SK-N-SH (cell line): ENCODE measurements at regions of chr17 and their contacts with region 1.

Region 1: DNA sequence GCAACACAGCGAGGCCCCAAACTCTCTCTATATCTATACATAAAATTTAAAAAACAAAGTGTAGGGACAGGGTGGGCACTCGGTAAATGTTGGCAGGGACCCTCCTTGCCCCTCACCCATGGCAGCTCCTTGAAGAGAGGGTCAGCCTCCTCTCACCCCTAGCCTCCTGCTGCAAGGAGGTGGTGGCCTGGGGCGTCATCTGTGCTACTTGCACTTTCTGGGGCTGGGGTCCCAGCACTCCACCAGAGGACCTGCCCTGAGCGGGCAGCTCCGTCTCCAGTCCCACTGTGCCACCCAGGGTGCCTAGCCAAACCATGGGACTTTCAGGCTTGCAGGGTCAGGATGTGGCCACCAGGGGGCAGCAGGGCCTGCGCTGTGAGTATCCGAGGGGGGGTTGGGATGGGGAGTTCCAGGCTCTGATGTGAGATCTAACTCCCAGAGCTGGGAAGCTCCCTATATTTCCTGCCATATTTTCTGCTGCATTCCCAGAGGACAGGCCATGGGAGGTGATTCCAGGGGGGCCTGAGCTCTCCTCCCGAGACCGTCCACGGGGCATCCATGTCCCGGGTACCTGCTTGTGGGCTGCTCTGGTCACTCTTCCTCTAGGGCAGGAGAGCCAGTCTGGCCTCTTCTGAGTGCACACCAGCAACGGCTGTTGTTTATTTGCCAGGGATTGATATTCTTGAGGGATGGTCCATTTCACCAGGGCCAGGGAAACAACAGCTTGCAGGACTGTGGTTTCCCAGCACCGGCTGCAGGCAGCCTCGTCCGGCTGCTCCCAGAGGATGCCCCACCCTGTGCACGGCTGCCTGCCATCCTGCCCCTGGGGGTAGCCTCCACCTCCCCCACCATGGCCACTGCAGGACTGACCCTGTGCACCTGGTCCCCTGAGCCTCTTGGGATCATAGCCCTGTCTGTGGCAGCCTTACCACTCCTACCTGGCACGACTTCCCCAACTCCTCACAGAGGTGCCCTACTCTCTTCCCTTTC is 1.1 kb downstream of the GPR142 start:
- DNase-seq: peak; percentile 95
- H3K4me3 ChIP-seq: no peak overlapping the region; a peak in 1 of 4 replicates
- H3K27ac ChIP-seq: no peak overlapping the region
- H3K4me1 ChIP-seq: peaks cover 0 to 5% of the 10 kb centered on the region in 2 experiments; a peak in 1 of 4 replicates
- H3K27me3 ChIP-seq: no peaks in the 10 kb centered on the region
- CTCF ChIP-seq: peak; percentile 63
- EP300 ChIP-seq: no peak
- RAD21 ChIP-seq: peak; percentile 72

Region 2: GRCh38 chr17:74305865-74306654 is 62.3 kb before region 1 on chr17:
- CTCF ChIA-PET with region 1: interaction called, 20 read pairs
- POLR2A ChIA-PET with region 1: no interaction called
- DNase-seq: no peak
- H3K4me3 ChIP-seq: no peak overlapping the region
- H3K27ac ChIP-seq: no peak overlapping the region
- H3K4me1 ChIP-seq: no peaks in the 10 kb centered on the region
- H3K27me3 ChIP-seq: no peaks in the 10 kb centered on the region
- CTCF ChIP-seq: no peak
- EP300 ChIP-seq: no peak
- RAD21 ChIP-seq: peak; percentile 28; the same call in 1 of the 2 replicates

Region 3: DNA sequence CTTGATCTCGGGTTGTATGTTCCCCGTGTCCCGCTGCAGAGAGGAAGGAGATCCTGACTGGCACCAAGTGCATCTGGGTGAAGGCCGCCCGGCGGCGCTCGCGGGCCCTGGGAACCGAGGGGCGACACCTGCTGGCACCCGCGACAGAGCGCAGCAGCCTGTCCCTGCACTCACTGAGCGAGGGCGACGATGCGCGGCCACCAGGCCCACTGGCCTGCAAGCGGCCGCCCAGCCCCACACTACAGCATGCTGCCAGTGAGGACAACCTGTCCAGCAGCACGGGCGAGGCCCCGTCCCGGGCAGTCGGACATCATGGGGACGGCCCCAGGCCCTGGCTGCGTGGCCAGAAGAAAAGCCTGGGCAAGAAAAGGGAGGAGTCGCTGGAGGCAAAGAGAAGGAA is 14.3 kb before region 1 on chr17:
- CTCF ChIA-PET with region 1: interaction called, 194 read pairs
- POLR2A ChIA-PET with region 1: no interaction called
- DNase-seq: peak; percentile 94
- H3K4me3 ChIP-seq: no peak overlapping the region
- H3K27ac ChIP-seq: no peak overlapping the region
- H3K4me1 ChIP-seq: peaks cover 0 to 2% of the 10 kb centered on the region in 2 experiments; a peak in 1 of 4 replicates
- H3K27me3 ChIP-seq: no peaks in the 10 kb centered on the region
- CTCF ChIP-seq: no peak
- EP300 ChIP-seq: no peak
- RAD21 ChIP-seq: peak; percentile 54

Region 4: DNA sequence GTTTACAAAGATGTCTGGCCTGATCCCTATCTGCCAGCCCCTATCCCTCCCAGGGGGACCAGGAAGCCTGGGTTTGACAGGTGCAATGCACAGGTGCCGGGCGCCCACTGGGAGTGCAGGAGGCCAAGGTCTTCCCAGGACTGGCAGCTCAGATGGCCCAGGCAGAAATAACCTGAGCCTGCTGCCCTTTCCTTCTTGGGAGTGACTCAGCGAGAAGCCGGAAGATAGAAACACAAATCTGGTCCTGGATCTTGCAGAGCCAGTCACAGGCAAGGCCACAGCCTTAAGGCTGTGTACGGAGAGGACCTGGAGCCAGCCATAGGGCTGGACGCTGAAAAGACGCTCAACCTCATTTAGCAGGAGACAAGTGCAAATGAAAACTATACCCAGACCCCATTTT is 26.6 kb after region 1 on chr17:
- CTCF ChIA-PET with region 1: interaction called, 31 read pairs
- POLR2A ChIA-PET with region 1: no interaction called
- DNase-seq: no peak
- H3K4me3 ChIP-seq: no peak overlapping the region
- H3K27ac ChIP-seq: no peak overlapping the region
- H3K4me1 ChIP-seq: no peaks in the 10 kb centered on the region; a peak in 1 of 4 replicates
- H3K27me3 ChIP-seq: no peaks in the 10 kb centered on the region
- CTCF ChIP-seq: no peak
- EP300 ChIP-seq: no peak
- RAD21 ChIP-seq: no peak

Region 5: DNA sequence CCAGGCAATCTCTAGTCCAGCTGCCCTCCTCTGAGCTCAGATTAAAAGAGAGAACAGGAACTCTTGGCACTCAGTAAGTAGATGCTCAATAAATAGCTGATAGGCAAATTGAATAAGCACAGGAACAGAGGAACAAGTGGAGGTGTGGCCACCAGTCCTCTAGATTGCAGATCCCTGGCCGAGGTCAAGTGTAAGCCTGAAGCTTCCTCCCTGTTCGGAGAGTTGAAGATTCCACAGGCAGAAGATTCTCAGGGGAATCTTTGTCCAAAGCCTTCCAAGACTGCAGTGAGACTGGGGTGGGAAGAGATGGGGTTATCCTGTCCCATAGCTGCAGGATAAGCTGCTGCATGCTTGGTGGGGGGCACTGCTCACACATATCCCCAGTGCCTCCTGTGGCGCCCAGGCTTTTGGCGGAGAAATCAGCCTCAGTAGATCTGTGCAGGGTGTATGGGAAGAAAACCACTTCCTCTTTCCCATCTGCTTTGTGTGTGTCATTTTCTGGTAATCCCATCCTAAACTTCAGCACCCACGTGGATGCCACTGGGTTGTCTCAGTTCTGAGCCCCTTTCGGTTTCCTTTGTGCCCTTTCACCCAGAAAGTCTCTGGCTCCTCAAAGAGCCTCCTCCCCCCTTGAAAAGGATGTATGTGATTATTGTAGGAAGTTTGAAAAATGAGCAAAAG is 110.2 kb after region 1 on chr17:
- CTCF ChIA-PET with region 1: interaction called, 61 read pairs
- POLR2A ChIA-PET with region 1: no interaction called
- DNase-seq: peak; percentile 12
- H3K4me3 ChIP-seq: no peak overlapping the region
- H3K27ac ChIP-seq: no peak overlapping the region
- H3K4me1 ChIP-seq: no peaks in the 10 kb centered on the region
- H3K27me3 ChIP-seq: no peaks in the 10 kb centered on the region
- CTCF ChIP-seq: no peak
- EP300 ChIP-seq: no peak
- RAD21 ChIP-seq: no peak

Region 6: DNA sequence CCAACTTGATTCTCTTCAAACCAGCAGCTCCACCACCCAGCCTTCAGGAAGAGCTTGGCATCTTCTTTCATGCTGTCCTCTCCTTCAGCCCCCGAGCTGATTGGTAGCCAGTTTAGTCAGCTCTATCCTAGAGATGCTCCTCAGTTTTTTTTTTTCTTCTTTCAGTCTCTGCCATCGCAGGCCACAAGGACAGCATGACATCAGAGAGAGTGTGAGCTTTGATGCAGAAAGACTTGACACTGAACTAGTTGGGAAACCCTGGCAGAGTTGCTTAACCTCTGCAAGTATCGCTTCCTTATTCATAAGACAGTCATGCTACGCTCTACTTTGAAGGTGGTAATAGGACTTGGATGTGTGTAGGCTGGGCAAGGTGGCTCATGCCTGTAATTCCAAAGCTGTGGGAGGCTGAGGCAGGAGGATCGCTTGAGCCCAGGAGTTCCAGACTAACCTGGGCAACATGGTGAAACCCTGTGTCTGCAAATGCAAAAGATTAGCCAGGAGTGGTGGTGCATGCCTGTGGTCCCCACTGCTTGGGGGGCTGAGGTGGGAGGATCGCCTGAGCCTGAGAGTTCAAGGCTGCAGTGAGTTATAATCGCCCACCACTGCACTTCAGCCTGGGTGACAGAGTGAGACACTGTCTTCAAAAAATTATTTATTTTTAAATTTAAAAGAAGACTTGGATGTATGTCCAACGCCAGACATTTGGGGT is 160.3 kb after region 1 on chr17:
- CTCF ChIA-PET with region 1: interaction called, 23 read pairs
- POLR2A ChIA-PET with region 1: no interaction called
- DNase-seq: no peak
- H3K4me3 ChIP-seq: no peak overlapping the region
- H3K27ac ChIP-seq: no peak overlapping the region
- H3K4me1 ChIP-seq: no peaks in the 10 kb centered on the region
- H3K27me3 ChIP-seq: no peaks in the 10 kb centered on the region
- CTCF ChIP-seq: no peak
- EP300 ChIP-seq: no peak
- RAD21 ChIP-seq: no peak

Region 7: DNA sequence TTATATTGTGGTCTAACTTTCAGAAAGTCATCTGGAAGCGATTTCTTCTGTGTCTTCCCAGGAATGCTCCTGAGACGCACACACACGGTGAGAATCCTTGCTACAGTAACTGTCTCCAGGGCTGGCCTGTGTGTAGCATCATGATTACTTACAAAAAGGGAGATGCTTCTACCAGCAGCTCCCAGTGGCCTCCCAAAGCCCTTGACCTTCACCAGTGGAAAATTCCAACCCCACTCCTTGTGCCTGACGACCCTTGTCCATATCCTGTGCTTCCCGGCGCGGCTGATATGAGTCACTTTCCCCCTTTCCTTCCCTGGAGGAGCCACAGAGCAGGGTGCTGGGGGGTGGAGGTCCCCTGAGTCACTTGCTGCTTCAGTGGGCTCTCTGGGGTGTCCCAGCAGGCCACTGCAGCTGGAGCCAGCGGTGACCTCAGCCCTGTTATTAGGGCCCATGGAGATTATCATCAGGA is 429.9 kb after region 1 on chr17:
- CTCF ChIA-PET with region 1: no interaction called
- POLR2A ChIA-PET with region 1: no interaction called
- DNase-seq: no peak
- H3K4me3 ChIP-seq: no peak overlapping the region; a peak in 1 of 4 replicates
- H3K27ac ChIP-seq: peak overlapping the region; percentile 56 to 82
- H3K4me1 ChIP-seq: peaks cover 23 to 29% of the 10 kb centered on the region in 2 experiments
- H3K27me3 ChIP-seq: no peaks in the 10 kb centered on the region
- CTCF ChIP-seq: no peak
- EP300 ChIP-seq: 0 out of 4 replicates have a peak, but pooled peaks of 1 of the 2 experiments have one; percentile 13
- RAD21 ChIP-seq: no peak